ENCODE measurements at regions of chr4 and their contacts with region 1.

Region 1: GRCh38 chr4:144190009-144190408 is 49.5 kb upstream of the GYPA start:
- DNase-seq: no peak
- ATAC-seq: no peak

Region 2: DNA sequence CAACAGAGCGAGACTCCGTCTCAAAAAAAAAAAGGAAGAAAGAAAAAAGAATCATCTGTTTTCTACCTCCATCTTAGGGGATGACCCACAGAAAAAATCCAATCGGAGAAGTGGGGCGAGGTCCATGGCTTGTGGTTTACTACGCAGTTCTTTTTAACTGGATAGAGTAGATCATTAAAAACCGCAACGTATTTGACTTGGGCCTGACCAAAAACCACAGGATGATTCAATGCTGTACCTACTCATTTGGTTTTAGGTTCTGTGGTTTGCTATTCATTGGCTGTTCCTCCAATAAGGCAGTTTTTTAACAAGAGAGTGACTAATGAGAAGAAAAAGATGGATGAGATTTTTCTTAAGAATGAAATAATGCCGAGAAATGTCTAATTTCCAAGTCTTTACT is 573.2 kb before region 1 on chr4:
- intact Hi-C with region 1: no loop called
- DNase-seq: no peak
- ATAC-seq: no peak

Region 3: DNA sequence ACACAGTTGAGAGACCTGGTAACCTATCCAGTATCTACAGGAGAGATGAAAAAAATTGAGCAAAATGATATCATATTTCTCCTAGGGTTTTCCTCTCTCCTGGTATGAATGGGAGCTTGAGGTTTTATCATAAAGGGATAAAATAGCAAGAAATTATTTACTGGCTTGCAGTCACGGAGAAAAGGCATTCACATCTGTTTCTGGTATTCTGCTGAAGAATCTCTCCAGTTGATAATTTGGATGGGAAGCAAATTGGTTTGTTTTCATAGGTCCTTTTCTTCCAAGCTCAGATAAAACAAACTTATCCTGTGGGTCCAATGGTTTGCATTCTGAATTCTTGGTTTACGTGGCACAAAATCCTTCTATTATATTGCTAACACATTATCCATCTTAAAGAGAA is 33.7 kb after region 1 on chr4:
- intact Hi-C with region 1: loop called (anchors 1 kb)
- DNase-seq: no peak
- ATAC-seq: peak; percentile 65